OCI-LY7 (cell line): ENCODE measurements at regions of chr11 and their contacts with region 1.

Region 1: GRCh38 chr11:117426269-117426685 is 98.6 kb downstream of the CEP164 start:
- DNase-seq: peak; percentile 58
- H3K4me3 ChIP-seq: no peak overlapping the region
- H3K27ac ChIP-seq: no peak overlapping the region
- H3K4me1 ChIP-seq: no peaks in the 10 kb centered on the region
- CTCF ChIP-seq: peak; percentile 96

Region 2: GRCh38 chr11:117595440-117595839 is 169.2 kb after region 1 on chr11:
- CTCF ChIA-PET with region 1: no interaction called
- POLR2A ChIA-PET with region 1: no interaction called
- intact Hi-C with region 1: loop called (anchors 2 kb)
- DNase-seq: peak; percentile 2
- H3K4me3 ChIP-seq: no peak overlapping the region
- H3K27ac ChIP-seq: no peak overlapping the region
- H3K4me1 ChIP-seq: no peaks in the 10 kb centered on the region
- CTCF ChIP-seq: peak; percentile 43; the same call in 1 of the 2 replicates

Region 3: DNA sequence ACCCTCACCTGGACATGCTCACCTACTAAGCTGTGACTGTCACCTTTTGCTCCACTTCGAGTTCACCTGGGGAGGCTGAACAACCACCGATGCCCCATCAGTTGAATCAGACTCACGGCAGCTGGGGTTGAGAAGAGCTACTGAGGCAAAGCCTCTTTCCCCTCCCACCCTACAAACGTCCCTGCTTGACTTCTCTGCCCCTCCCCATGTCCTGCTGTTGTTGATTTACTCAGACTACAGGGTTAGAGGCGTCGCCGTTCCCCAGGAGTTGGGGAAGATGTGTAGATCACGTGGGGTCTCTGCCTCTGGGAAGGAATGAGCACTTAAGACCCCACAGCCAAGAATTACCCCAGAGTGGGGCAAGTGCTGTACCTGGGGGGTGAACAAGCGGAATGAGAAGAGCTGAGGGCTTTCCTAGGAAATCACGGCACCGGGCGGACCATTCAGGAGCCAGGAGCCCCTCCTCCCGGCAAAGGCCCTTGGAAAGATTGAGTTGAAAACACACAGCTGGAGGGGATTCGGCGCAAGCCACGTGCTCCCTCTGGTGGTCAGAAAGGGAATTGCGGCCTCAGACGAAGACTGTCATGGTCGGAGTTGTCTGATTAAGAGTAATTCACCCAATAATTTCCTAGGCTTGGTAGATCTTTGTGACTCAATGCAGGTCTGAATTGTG is 391.2 kb after region 1 on chr11:
- CTCF ChIA-PET with region 1: interaction called, 3 read pairs
- POLR2A ChIA-PET with region 1: no interaction called
- intact Hi-C with region 1: loop called (anchors 1 kb)
- DNase-seq: peak; percentile 64
- H3K4me3 ChIP-seq: no peak overlapping the region
- H3K27ac ChIP-seq: no peak overlapping the region
- H3K4me1 ChIP-seq: peaks cover 16% of the 10 kb centered on the region
- CTCF ChIP-seq: peak; percentile 98